ENCODE measurements at regions of chr4 and their contacts with region 1.

Region 1: DNA sequence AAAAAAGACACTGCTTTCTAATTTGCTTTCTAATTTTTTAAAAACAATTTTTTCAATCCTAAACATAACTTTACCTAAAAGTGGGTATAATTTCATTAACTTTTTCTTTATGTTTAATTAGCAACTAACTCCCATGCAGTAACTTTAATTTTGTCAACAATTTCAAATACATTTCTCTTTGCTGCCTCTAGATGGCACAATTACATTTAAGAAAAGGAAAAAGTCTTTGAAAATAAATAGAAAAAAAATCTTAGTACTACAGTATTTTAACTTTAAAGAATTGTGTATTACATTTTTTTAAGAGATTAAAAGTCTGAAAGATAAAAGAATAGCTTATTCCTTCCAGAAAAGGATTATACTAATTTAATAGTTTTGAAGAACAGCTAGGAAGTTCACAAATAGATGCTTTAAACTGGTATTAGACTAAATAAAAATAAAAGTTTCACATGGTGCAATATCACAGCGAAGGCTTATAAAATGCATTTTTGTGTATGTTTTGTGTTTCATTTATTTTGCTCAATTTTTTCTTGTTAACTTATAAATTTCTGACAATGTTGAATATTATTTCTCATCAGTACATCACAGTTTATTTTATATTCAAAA is 105.1 kb downstream of the ADGRA3 start:
- DNase-seq: peak in 2 of 5 donors; percentile 21 to 56
- H3K4me3 ChIP-seq: no peak overlapping the region
- H3K27ac ChIP-seq: no peak overlapping the region
- H3K4me1 ChIP-seq: no peaks in the 10 kb centered on the region
- H3K27me3 ChIP-seq: no peaks in the 10 kb centered on the region
- CTCF ChIP-seq: peak; percentile 63

Region 2: DNA sequence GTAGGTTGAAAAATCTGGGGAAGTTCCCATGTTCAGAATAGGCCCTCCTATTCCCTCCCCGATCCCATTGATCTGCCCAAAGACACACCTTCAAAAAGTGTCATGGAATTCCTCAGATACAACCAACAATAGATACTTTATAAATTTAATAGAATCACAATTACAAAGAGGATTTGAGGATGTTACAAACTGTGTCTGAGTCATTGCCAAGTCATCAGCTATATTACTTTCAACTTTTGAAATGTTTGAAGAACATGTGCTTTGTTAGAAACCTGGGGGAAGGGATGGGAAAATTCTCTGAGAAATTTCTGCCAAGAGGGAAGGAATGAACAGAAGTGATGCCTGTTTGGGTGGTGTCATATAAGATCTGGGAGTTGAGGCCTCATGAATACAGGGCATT is 508.9 kb before region 1 on chr4:
- intact Hi-C with region 1: no loop called
- DNase-seq: no peak
- H3K4me3 ChIP-seq: no peak overlapping the region
- H3K27ac ChIP-seq: no peak overlapping the region
- H3K4me1 ChIP-seq: no peaks in the 10 kb centered on the region
- H3K27me3 ChIP-seq: no peaks in the 10 kb centered on the region
- CTCF ChIP-seq: no peak

Region 3: DNA sequence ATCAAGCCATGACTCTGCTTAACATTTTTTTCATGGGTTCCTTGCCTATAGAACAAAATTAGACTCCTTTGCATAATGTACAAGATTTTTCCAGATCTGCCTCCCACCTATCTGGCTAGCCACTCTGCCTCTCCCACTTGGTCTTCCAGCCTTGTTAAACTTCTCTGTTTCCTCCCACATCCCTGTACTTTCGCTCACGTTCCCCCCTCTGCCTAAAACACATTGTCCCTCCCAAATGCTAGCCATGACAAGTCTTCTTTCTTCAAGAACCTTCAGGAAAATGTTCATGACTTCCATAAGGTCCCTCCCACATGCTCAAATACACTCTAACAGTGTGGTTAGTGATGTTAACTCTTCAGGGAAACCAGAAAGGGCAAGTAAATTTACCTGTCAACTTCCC is 109.5 kb before region 1 on chr4:
- intact Hi-C with region 1: no loop called
- DNase-seq: no peak
- H3K4me3 ChIP-seq: no peak overlapping the region
- H3K27ac ChIP-seq: no peak overlapping the region
- H3K4me1 ChIP-seq: no peaks in the 10 kb centered on the region
- H3K27me3 ChIP-seq: no peaks in the 10 kb centered on the region
- CTCF ChIP-seq: no peak

Region 4: GRCh38 chr4:22483551-22483981 is 72.8 kb after region 1 on chr4:
- intact Hi-C with region 1: no loop called
- DNase-seq: peak in 1 of 5 donors; percentile 42
- H3K4me3 ChIP-seq: no peak overlapping the region
- H3K27ac ChIP-seq: no peak overlapping the region
- H3K4me1 ChIP-seq: peaks cover 0 to 6% (median 0%) of the 10 kb centered on the region in 3 donors
- H3K27me3 ChIP-seq: no peaks in the 10 kb centered on the region
- CTCF ChIP-seq: no peak

Region 5: DNA sequence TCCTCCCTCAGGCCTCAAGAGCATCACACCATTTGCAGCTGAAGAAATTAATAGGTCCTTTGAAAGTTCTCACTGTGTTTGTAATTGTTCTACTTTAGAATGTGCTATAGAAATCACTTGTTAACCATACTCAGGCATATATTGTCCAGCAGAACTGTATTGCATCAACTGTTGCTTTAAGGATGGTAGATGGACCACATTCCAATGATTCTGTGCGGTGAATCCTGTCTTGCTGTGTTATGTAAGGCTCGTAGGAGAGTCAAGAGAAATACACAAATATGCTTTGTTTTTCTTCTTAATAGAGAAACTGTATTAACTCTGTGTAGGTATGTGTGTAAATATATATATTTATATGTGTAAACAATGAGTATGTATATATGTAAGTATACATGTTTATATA is 111.5 kb after region 1 on chr4:
- intact Hi-C with region 1: no loop called
- DNase-seq: no peak
- H3K4me3 ChIP-seq: no peak overlapping the region
- H3K27ac ChIP-seq: no peak overlapping the region
- H3K4me1 ChIP-seq: no peaks in the 10 kb centered on the region
- H3K27me3 ChIP-seq: no peaks in the 10 kb centered on the region
- CTCF ChIP-seq: no peak

Region 6: DNA sequence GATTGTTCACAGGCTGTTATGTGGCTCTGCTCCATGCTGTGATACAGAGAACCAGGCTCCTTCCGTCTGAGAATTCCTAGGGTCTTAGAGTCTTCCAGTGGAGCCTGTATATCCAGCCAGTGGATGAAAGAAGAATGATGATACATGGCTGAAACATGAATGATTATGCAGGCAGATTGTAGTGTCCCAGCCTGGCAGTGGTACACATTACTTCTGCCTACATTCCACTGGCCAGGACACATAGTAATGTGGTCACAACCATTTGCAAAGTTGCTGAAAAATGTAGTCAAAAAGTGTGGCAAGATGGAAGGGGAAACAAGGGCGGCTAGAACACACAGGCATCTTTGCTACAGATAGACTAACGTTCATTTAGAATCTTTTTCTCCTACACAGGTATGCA is 277.5 kb after region 1 on chr4:
- intact Hi-C with region 1: loop called (anchors 5 kb)
- DNase-seq: no peak
- H3K4me3 ChIP-seq: no peak overlapping the region
- H3K27ac ChIP-seq: no peak overlapping the region
- H3K4me1 ChIP-seq: no peaks in the 10 kb centered on the region
- H3K27me3 ChIP-seq: no peaks in the 10 kb centered on the region
- CTCF ChIP-seq: no peak

Measured in kidney (tissue), 22 donors.